K562 (cell line): ENCODE measurements at regions of chr17 and their contacts with region 1.

Region 1: GRCh38 chr17:58329035-58329809 is 627 bp upstream of the TSPOAP1 start:
- DNase-seq: peak; percentile 59 to 95 (median 74)
- ATAC-seq: peak; percentile 67
- H3K4me3 ChIP-seq: peak overlapping the region; percentile 91
- H3K27ac ChIP-seq: peak overlapping the region; percentile 99
- H3K4me1 ChIP-seq: peaks cover 25 to 56% of the 10 kb centered on the region in 2 experiments
- H3K27me3 ChIP-seq: no peaks in the 10 kb centered on the region
- CTCF ChIP-seq: peak; percentile 67 to 82 (median 72)
- EP300 ChIP-seq: no peak
- POLR2A ChIP-seq: peak; percentile 76
- RAD21 ChIP-seq: peak; percentile 48 to 56

Region 2: DNA sequence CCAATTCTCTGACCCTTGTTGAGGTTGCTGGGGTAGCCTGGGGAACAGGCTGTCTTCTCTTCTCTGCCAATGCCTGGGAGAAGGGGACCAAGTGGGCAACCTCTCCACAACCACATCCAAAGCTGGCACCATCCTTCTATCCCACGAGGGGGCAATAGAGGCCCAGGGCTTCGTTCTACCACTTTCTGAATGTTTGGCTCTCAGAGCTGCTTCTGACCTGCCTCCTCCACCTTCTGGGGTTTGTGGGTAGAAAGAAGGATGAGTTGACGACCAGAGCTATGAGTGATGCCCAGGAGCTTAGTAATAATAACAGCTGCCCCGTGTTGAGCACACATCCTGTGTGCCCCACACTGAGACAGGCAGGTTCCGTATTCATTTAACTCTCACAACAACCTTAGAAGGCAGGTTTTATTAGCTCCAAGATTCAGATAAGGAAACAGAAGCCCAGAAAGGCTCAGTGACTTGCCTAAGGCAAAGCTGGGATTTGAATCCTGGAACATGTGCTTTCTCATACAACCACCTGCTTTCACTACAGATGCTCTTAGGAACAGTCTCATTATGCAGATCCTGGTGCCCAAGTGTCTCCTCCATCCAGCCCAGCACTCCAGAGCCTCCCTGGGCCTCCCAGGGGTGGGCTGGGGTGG is 11.7 kb before region 1 on chr17:
- CTCF ChIA-PET with region 1: no interaction called
- POLR2A ChIA-PET with region 1: interaction called, 42 read pairs
- in situ Hi-C with region 1: no loop called
- intact Hi-C with region 1: no loop called
- DNase-seq: peak in 2 of 4 experiments; percentile 58 to 59
- ATAC-seq: peak; percentile 86
- H3K4me3 ChIP-seq: no peak overlapping the region
- H3K27ac ChIP-seq: no peak overlapping the region
- H3K4me1 ChIP-seq: peaks cover 0 to 17% of the 10 kb centered on the region in 2 experiments; a peak in 3 of 5 replicates
- H3K27me3 ChIP-seq: no peaks in the 10 kb centered on the region
- CTCF ChIP-seq: peak; percentile 78 to 84 (median 79)
- EP300 ChIP-seq: no peak
- POLR2A ChIP-seq: no peak
- RAD21 ChIP-seq: peak; percentile 82 to 93

Region 3: DNA sequence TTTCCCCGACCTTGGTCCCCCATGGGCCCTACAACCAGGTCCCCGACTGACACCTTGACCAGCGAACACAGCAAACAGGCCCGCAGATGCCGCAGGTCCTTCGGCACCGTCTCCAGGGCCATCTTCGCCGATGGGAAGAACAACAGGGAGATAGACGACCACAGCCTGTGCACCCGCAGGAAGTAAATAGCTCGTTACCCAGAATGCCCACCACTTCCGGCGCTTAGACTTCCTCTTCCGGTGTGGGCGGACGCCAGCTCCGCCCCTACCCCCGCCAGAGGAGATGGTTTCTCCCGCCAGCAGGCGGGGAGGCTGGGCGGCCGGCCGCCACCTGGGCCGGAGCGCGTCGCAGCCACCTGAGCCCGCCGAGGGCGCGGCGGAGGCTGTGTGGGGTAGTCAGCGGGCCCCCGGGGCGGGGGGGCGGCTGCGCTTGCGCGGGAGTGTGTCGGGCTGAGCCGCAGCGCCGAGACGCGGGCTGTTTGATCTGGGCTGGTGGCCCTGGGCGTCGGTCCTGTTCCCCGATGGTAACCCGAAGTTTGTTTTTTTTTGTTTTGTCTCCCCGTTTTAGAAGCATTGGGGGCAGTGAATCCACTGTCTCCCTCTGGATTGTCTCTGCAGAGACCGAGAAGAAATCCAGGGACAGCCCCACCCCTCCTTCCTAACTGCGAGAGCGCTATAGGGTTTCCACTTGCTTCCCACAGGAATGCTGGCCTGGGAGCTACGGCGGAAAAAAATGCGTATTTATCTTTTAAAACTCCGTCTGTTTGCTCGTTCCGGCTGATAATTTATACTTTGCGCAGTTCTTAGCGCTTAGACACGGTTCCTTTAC is 23.0 kb after region 1 on chr17 and contains the start of gene SUPT4H1:
- CTCF ChIA-PET with region 1: no interaction called
- POLR2A ChIA-PET with region 1: interaction called, 33 read pairs
- in situ Hi-C with region 1: no loop called
- intact Hi-C with region 1: loop called (anchors 1 kb)
- DNase-seq: peak; percentile 95 to 97 (median 96)
- ATAC-seq: peak; percentile 97
- H3K4me3 ChIP-seq: peak within 1 kb of the TSS; percentile 99
- H3K27ac ChIP-seq: peak within 1 kb of the TSS; percentile 93
- H3K4me1 ChIP-seq: peaks cover 15 to 20% of the 10 kb centered on the region in 2 experiments; a peak in 4 of 5 replicates
- H3K27me3 ChIP-seq: no peaks in the 10 kb centered on the region
- CTCF ChIP-seq: peak in 2 of 3 experiments; percentile 15 to 20; a peak in 2 of 6 replicates
- EP300 ChIP-seq: peak; percentile 64; the same call in 1 of the 2 replicates
- POLR2A ChIP-seq: peak; percentile 89
- RAD21 ChIP-seq: peak; percentile 38 to 49; a peak in 3 of 4 replicates
- polyA plus RNA-seq, gene SUPT4H1: 235 to 320 TPM

Region 4: DNA sequence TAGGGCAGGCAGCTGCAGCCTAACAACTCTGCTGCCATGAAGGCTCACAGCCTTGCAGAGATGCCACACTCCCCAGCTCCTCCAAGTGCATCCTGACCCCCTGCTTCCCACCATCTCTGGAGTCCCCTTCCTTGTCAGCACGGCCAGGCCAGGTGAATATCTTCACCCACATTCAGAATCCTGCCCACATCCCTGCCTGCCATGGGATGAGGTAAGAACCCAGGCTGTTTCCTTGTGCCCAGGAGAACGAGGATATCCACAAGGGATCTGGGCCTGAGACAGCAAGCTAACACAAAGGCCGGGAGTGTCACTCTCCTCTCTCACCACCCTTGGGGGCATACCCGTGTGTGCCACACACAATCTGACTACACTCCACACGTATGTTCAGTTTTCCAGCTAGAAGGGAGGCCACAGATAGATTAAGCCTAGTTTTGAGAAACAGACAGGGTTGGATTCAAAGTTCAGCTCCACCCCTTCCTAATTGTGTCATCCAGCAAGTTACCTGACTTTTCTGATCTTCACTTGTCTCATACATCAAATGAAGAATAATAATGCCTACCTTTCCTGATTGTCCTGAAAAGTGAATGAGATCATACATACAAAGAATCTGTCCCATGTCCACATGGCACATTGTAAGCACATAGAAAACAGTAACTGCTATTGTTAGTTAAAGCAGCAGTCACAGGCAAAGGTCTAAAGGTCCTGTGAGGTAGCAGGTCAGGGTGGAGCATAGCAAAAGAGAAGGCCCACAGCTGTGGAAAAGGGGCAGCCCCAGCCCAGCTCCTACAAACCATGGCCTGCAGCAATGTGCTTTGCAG is 40.2 kb after region 1 on chr17:
- CTCF ChIA-PET with region 1: no interaction called
- POLR2A ChIA-PET with region 1: interaction called, 23 read pairs
- in situ Hi-C with region 1: no loop called
- intact Hi-C with region 1: loop called (anchors 1 kb)
- DNase-seq: no peak
- ATAC-seq: no peak
- H3K4me3 ChIP-seq: no peak overlapping the region
- H3K27ac ChIP-seq: no peak overlapping the region
- H3K4me1 ChIP-seq: peaks cover 18 to 30% of the 10 kb centered on the region in 2 experiments
- H3K27me3 ChIP-seq: no peaks in the 10 kb centered on the region
- CTCF ChIP-seq: no peak
- EP300 ChIP-seq: no peak
- POLR2A ChIP-seq: no peak
- RAD21 ChIP-seq: no peak

Region 5: DNA sequence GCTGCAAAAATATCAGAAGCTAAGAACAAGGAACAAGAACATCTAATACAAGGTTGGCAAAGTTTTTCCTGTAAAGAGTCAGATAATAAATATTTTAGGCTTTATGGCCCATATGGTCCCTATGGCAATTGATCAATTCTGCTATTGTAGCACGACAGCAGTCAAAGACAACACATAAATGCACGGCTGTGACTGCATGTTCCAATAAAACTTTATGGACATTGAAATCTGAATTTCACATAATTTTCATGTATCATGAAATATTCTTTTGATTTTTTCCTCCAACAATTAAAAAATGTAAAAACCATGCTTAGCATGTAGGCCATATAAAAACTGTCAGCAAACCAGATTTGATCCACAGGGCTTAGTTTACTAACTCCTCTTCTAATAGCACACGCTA is 98.6 kb after region 1 on chr17:
- CTCF ChIA-PET with region 1: no interaction called
- POLR2A ChIA-PET with region 1: interaction called, 24 read pairs
- in situ Hi-C with region 1: no loop called
- intact Hi-C with region 1: no loop called
- DNase-seq: no peak
- ATAC-seq: no peak
- H3K4me3 ChIP-seq: no peak overlapping the region; the same call in 1 of the 2 replicates
- H3K27ac ChIP-seq: no peak overlapping the region
- H3K4me1 ChIP-seq: peaks cover 0 to 3% of the 10 kb centered on the region in 2 experiments; a peak in 2 of 5 replicates
- H3K27me3 ChIP-seq: no peaks in the 10 kb centered on the region
- CTCF ChIP-seq: no peak
- EP300 ChIP-seq: no peak
- POLR2A ChIP-seq: no peak
- RAD21 ChIP-seq: no peak